Activated CD8-positive, alpha-beta T cell treated with anti-CD3 and anti-CD28 coated beads for 36 hours (primary cell): ENCODE measurements at regions of chr19 and their contacts with region 1.

Region 1: DNA sequence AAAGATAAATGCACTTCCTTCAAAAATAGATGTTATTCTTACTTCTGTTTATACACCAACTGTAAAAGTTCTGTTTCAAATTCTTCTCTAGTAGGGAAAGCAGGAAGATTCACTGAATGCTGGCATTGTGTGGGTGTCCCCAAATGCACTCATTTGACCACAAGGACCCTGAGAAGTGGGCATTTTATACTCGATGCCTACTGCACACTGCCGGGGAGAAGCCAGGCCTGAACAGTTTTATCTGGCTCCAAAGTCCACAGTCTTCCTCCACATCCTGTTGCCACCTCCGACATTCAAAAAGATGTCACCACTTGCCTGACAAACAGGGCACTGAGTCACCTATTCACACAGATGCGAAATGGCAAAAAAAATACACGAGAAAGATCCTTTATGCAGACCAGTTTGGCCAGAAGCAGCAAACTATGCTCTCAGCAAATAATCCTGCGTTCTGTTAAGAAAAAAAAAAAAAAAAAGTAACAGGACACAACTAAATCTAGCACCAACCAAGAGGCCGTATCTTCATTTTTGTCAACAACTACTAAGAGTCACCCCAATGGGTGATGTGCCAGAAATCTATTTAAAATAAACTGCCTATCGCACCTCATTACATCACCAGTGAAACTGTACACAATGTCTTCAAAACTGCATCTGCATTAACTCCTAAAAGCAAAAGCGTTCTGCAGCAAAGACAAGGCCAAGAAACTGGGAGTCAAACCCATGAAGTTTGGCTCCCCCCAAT is 6.2 kb downstream of the ZC3H4 start:
- DNase-seq: peak; percentile 67
- ATAC-seq: peak; percentile 46
- H3K4me3 Mint-ChIP-seq: peak overlapping the region; percentile 89
- H3K27ac Mint-ChIP-seq: peak overlapping the region; percentile 99
- H3K4me1 Mint-ChIP-seq: peaks cover 59% of the 10 kb centered on the region
- H3K27me3 Mint-ChIP-seq: no peaks in the 10 kb centered on the region
- CTCF ChIP-seq: no peak

Region 2: GRCh38 chr19:47094557-47095475 is 12.6 kb before region 1 on chr19:
- CTCF ChIA-PET with region 1: interaction called, 15 read pairs
- POLR2A ChIA-PET with region 1: interaction called, 182 read pairs
- intact Hi-C with region 1: loop called (anchors 2 kb)
- DNase-seq: peak; percentile 66
- ATAC-seq: peak; percentile 71
- H3K4me3 Mint-ChIP-seq: peak overlapping the region; percentile 63
- H3K27ac Mint-ChIP-seq: peak overlapping the region; percentile 96
- H3K4me1 Mint-ChIP-seq: peaks cover 60% of the 10 kb centered on the region
- H3K27me3 Mint-ChIP-seq: no peaks in the 10 kb centered on the region
- CTCF ChIP-seq: no peak